Activated T-helper 1 cell treated with anti-CD3 and anti-CD28 coated beads, Interleukin-12 subunit alpha, Interleukin-12 subunit beta, Interleukin-2, Interleukin-4 antibody, amounts not matched to agents 30 ng/mL and 10 ng/mL and 1 ng/mL, durations not matched to agents 14 hours and 24 hours and 36 hours (primary cell): ENCODE measurements at regions of chr7 and their contacts with region 1.

Region 1: GRCh38 chr7:24819916-24820689 is 62.8 kb upstream of the GSDME start:
- DNase-seq: peak; percentile 75
- H3K4me3 Mint-ChIP-seq: peak overlapping the region; percentile 73
- H3K27ac Mint-ChIP-seq: peak overlapping the region; percentile 98
- H3K4me1 Mint-ChIP-seq: peaks cover 54% of the 10 kb centered on the region
- H3K27me3 Mint-ChIP-seq: peaks cover 2% of the 10 kb centered on the region

Region 2: DNA sequence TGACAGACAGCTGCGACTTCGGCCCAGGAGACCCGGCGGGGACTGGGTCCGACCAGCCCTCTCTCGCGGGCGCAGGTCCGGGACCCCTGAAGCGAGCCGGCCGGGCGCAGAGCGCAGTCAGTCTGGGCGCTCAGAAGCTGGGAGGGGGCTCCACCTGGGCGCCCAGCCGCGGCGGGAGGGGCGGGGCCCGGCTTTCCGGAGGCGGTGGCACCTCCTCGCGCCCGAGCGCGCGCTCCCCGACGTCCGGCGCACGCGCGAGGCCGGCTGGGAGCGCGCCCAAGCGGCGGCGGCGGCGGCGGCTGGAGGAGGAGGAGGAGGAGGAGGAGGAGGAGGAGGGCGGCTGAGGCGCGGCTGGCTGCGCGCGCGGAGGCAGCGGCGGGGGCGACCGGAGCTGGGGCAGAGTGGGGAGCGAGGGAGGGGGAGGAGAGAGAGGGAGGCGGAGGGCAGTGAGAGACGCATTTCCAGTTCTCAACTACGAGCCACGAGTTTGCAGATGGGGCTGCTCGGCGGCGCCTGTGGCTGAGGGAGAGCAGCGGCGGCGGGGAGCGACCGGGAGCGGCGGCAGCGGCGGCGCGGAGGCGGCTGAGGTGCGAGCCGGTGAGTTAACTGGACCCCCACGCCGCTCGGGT is 247.0 kb before region 1 on chr7 and contains the start of gene PALS2:
- intact Hi-C with region 1: loop called (anchors 2 kb)
- DNase-seq: peak; percentile 77
- H3K4me3 Mint-ChIP-seq: peak within 1 kb of the TSS; percentile 94
- H3K27ac Mint-ChIP-seq: peak within 1 kb of the TSS; percentile 84
- H3K4me1 Mint-ChIP-seq: peaks cover 29% of the 10 kb centered on the region
- H3K27me3 Mint-ChIP-seq: peaks cover 41% of the 10 kb centered on the region
- total RNA-seq, gene PALS2: 34.9 and 42.2 TPM in 2 replicates

Region 3: GRCh38 chr7:24877790-24878311 is 57.7 kb after region 1 on chr7:
- intact Hi-C with region 1: loop called (anchors 1 kb)
- DNase-seq: peak; percentile 5
- H3K4me3 Mint-ChIP-seq: peak overlapping the region; percentile 68
- H3K27ac Mint-ChIP-seq: peak overlapping the region; percentile 78
- H3K4me1 Mint-ChIP-seq: peaks cover 60% of the 10 kb centered on the region
- H3K27me3 Mint-ChIP-seq: no peaks in the 10 kb centered on the region

Region 4: DNA sequence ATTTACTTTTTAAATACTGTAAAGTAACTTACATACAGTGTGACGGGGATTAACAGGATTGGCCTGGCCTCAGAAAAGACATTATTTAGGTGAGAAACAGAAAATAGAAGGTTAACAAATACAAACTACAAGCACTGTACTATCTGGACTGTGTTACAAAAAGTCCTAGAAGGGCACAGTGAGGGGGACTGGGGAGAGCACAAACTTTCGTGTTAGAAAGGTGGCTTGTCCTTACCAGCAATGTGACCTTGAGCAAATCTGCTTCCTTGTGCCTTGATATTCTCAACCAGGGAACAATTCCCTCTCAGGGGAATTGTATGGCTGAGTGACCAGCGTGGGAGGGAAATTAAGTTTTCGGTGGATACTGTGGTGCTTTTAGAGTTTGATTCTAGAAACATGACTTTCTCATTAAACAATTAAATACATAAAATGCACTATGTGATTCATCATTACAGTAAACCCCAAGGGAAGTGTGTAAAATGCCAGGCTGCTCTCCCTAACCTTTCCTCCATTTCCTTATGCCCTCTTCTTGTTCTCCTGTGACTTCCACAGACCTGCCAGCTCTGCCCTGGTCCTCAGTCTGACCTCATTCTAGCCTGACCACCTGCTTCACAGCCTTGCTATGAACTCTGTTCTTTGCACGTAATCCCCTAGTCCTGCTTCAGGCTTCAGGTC is 102.1 kb after region 1 on chr7:
- intact Hi-C with region 1: loop called (anchors 1 kb)
- DNase-seq: no peak
- H3K4me3 Mint-ChIP-seq: peak overlapping the region; percentile 3
- H3K27ac Mint-ChIP-seq: peak overlapping the region; percentile 91
- H3K4me1 Mint-ChIP-seq: peaks cover 95% of the 10 kb centered on the region
- H3K27me3 Mint-ChIP-seq: no peaks in the 10 kb centered on the region

Region 5: GRCh38 chr7:25028370-25029021 is 208.4 kb after region 1 on chr7:
- intact Hi-C with region 1: loop called (anchors 1 kb)
- DNase-seq: peak; percentile 13
- H3K4me3 Mint-ChIP-seq: peak overlapping the region; percentile 12
- H3K27ac Mint-ChIP-seq: peak overlapping the region; percentile 93
- H3K4me1 Mint-ChIP-seq: peaks cover 40% of the 10 kb centered on the region
- H3K27me3 Mint-ChIP-seq: peaks cover 12% of the 10 kb centered on the region

Region 6: DNA sequence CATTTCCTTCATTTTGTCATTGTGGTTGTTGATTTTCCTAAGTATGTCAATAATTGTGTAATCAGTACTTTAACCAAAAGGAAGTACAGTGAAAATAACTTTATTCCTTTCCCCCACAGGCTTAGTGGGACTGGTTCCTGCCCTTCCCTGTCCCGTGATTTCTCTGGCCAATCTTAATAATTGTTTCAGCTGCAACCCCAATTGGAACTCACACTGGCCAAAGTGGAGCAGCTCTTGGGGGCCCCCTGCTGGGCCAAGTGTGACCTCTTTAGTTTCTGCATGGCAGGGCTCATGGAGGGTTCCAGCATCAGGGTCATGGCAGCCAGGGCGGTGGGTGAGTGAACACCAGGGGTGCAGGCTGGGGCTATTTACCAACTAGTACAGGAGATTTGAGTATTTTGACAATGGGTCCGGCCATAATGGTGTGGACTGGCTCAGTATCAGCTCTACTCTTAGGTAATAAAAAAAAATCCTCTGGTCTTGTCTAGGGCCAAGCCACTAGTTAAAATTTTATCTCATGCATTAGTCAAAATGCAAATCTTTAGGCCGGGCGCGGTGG is 273.2 kb after region 1 on chr7:
- intact Hi-C with region 1: loop called (anchors 1 kb)
- DNase-seq: peak; percentile 67
- H3K4me3 Mint-ChIP-seq: no peak overlapping the region
- H3K27ac Mint-ChIP-seq: no peak overlapping the region
- H3K4me1 Mint-ChIP-seq: peaks cover 18% of the 10 kb centered on the region
- H3K27me3 Mint-ChIP-seq: peaks cover 18% of the 10 kb centered on the region

Region 7: GRCh38 chr7:25125137-25125946 is 305.2 kb after region 1 on chr7 and contains the start of gene CYCS:
- intact Hi-C with region 1: loop called (anchors 1 kb)
- DNase-seq: peak; percentile 100
- H3K4me3 Mint-ChIP-seq: peak within 1 kb of the TSS; percentile 93
- H3K27ac Mint-ChIP-seq: peak within 1 kb of the TSS; percentile 99
- H3K4me1 Mint-ChIP-seq: peaks cover 29% of the 10 kb centered on the region
- H3K27me3 Mint-ChIP-seq: no peaks in the 10 kb centered on the region
- total RNA-seq, gene CYCS: 280 TPM in 2 replicates